HepG2 (cell line): ENCODE measurements at regions of chr17 and their contacts with region 1.

Region 1: GRCh38 chr17:4366327-4367063 is at the start of gene UBE2G1:
- DNase-seq: peak; percentile 96
- ATAC-seq: peak; percentile 86
- H3K4me3 ChIP-seq: peak within 1 kb of the TSS; percentile 94 to 97 (median 97)
- H3K27ac ChIP-seq: peak within 1 kb of the TSS; percentile 95
- H3K4me1 ChIP-seq: peaks cover 64% of the 10 kb centered on the region
- H3K27me3 ChIP-seq: no peaks in the 10 kb centered on the region; a peak in 1 of 5 replicates
- CTCF ChIP-seq: peak; percentile 74
- EP300 ChIP-seq: no peak
- POLR2A ChIP-seq: peak; percentile 82 to 91
- RAD21 ChIP-seq: peak; percentile 89
- total RNA-seq, gene UBE2G1: 42.6 and 49.8 TPM in 2 replicates

Region 2: GRCh38 chr17:4143563-4144421 is 222.7 kb before region 1 on chr17:
- CTCF ChIA-PET with region 1: no interaction called
- POLR2A ChIA-PET with region 1: no interaction called
- in situ Hi-C with region 1: no loop called
- intact Hi-C with region 1: loop called (anchors 5 kb)
- DNase-seq: peak; percentile 82
- ATAC-seq: peak; percentile 85
- H3K4me3 ChIP-seq: peak overlapping the region; percentile 81 to 94 (median 83)
- H3K27ac ChIP-seq: peak overlapping the region; percentile 95
- H3K4me1 ChIP-seq: peaks cover 38% of the 10 kb centered on the region
- H3K27me3 ChIP-seq: no peaks in the 10 kb centered on the region; a peak in 1 of 5 replicates
- CTCF ChIP-seq: no peak
- EP300 ChIP-seq: no peak
- POLR2A ChIP-seq: peak; percentile 84 to 88
- RAD21 ChIP-seq: no peak

Region 3: DNA sequence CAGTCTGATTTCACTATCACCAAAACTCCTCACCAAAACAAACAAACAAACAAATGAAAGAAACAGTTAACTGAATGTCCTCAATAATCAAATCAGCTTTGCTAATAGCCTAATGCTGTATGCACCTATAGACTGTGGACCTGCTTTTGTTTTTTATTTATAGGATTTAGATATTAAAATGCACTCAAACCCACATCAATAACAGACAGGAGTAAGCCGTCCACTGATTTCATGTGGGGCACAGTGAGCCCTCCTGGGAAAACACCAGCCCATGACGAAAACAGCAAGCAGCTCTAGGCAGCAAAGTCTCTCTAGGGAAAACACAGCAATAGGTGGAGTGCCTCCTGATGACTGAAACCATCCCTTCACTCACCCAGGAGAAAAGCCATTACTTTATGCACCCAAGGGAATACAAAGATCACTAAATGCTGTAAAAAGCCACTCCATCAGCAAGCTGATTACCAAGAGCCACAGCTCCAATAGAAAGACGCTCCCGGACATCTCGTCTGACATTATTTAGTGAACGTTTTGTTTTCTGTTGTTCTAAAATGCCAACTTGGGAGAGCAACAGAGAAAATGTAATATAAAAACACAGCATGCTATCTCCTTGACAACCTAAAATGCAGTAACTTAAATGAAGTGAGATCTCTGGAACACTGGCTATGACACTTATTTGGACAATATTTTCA is 150.5 kb before region 1 on chr17:
- CTCF ChIA-PET with region 1: interaction called, 11 read pairs
- POLR2A ChIA-PET with region 1: no interaction called
- in situ Hi-C with region 1: no loop called
- intact Hi-C with region 1: loop called (anchors 1 kb)
- DNase-seq: no peak
- ATAC-seq: no peak
- H3K4me3 ChIP-seq: no peak overlapping the region
- H3K27ac ChIP-seq: no peak overlapping the region
- H3K4me1 ChIP-seq: peaks cover 18% of the 10 kb centered on the region
- H3K27me3 ChIP-seq: no peaks in the 10 kb centered on the region
- CTCF ChIP-seq: no peak
- EP300 ChIP-seq: no peak
- POLR2A ChIP-seq: no peak
- RAD21 ChIP-seq: no peak

Region 4: DNA sequence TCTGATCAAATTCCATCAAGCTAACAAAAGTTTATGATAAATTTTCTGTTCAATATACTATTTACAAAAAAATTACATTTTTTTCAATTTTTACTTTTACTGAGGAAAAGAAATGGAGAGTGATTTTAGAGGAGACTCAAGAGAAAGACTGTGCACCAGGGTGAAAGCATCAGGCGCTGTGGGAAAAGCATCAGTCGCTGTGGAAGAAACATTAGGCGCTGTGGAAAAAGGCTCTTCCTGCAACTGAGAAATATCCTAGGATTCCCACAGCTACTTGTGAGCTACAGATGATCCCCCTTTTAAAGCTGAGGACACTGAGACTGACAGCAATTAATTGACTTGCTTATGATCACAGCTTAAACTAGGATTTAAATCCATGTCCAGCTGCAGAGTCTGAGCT is 107.6 kb before region 1 on chr17:
- CTCF ChIA-PET with region 1: no interaction called
- POLR2A ChIA-PET with region 1: no interaction called
- in situ Hi-C with region 1: no loop called
- intact Hi-C with region 1: loop called (anchors 2 kb)
- DNase-seq: no peak
- ATAC-seq: no peak
- H3K4me3 ChIP-seq: no peak overlapping the region
- H3K27ac ChIP-seq: no peak overlapping the region
- H3K4me1 ChIP-seq: peaks cover 17% of the 10 kb centered on the region
- H3K27me3 ChIP-seq: no peaks in the 10 kb centered on the region; a peak in 1 of 5 replicates
- CTCF ChIP-seq: no peak
- EP300 ChIP-seq: no peak
- POLR2A ChIP-seq: no peak
- RAD21 ChIP-seq: no peak

Region 5: DNA sequence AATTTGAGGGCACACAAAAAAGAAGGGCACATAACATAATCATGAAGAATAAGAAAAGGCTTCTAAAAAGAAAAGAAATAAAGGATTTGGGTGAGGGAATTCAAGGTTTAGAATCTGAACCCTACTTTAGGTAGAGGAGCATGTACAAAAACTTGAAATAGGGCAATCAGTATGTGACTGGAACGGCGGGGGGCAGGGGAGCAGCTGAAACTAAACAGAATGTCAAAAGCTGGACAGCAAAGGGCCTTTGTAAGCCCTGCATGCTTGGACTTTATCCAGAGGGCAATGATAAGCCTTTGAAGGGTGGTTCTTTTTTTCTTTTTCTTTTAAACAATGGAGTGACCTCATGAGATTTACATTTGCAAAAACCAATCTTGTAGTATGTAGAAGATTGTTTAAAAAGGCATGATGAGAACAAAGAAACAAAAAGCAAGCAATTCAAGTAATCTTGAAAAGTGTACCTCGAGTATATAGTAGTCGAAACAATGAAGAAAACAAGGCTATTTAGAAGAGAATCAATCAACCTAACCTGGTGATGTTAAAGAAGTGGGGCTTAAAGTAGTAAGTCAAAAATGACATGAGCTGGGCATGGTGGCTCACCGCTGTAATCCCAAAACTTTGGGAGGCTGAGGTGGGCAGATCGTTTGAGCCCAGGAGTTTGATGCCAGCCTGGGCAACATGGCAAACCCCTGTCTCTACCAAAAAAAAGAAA is 56.0 kb before region 1 on chr17:
- CTCF ChIA-PET with region 1: no interaction called
- POLR2A ChIA-PET with region 1: no interaction called
- in situ Hi-C with region 1: no loop called
- intact Hi-C with region 1: loop called (anchors 5 kb)
- DNase-seq: peak; percentile 90
- ATAC-seq: peak; percentile 98
- H3K4me3 ChIP-seq: peak overlapping the region in 2 of 3 experiments; percentile 18 to 30; a peak in 1 of 6 replicates
- H3K27ac ChIP-seq: peak overlapping the region; percentile 65
- H3K4me1 ChIP-seq: peaks cover 70% of the 10 kb centered on the region
- H3K27me3 ChIP-seq: no peaks in the 10 kb centered on the region
- CTCF ChIP-seq: no peak
- EP300 ChIP-seq: peak in 1 of 2 experiments; percentile 75; a peak in 2 of 4 replicates
- POLR2A ChIP-seq: no peak
- RAD21 ChIP-seq: no peak

Region 6: GRCh38 chr17:4394208-4395110 is 28.0 kb after region 1 on chr17:
- CTCF ChIA-PET with region 1: no interaction called
- POLR2A ChIA-PET with region 1: no interaction called
- in situ Hi-C with region 1: no loop called
- intact Hi-C with region 1: no loop called
- DNase-seq: no peak
- ATAC-seq: peak; percentile 33
- H3K4me3 ChIP-seq: peak overlapping the region in 1 of 3 experiments; percentile 45; a peak in 1 of 6 replicates
- H3K27ac ChIP-seq: no peak overlapping the region
- H3K4me1 ChIP-seq: peaks cover 50% of the 10 kb centered on the region
- H3K27me3 ChIP-seq: 0 out of 5 replicates have a peak, but pooled peaks cover 0 to 5% of the 10 kb centered on the region in 2 experiments
- CTCF ChIP-seq: no peak
- EP300 ChIP-seq: no peak
- POLR2A ChIP-seq: no peak
- RAD21 ChIP-seq: no peak